ENCODE measurements at regions of chr19 and their contacts with region 1.

Region 1: GRCh38 chr19:34501339-34502320 is 20.1 kb downstream of the WTIP start:
- DNase-seq: peak; percentile 96
- H3K4me3 Mint-ChIP-seq: no peak overlapping the region
- H3K27ac Mint-ChIP-seq: no peak overlapping the region
- H3K4me1 Mint-ChIP-seq: peaks cover 3% of the 10 kb centered on the region
- H3K27me3 Mint-ChIP-seq: peaks cover 6% of the 10 kb centered on the region

Region 2: GRCh38 chr19:34404109-34404897 is 97.3 kb before region 1 on chr19 and contains the start of gene PDCD2L:
- intact Hi-C with region 1: loop called (anchors 2 kb)
- DNase-seq: peak; percentile 98
- H3K4me3 Mint-ChIP-seq: peak within 1 kb of the TSS; percentile 93
- H3K27ac Mint-ChIP-seq: peak within 1 kb of the TSS; percentile 94
- H3K4me1 Mint-ChIP-seq: peaks cover 8% of the 10 kb centered on the region
- H3K27me3 Mint-ChIP-seq: no peaks in the 10 kb centered on the region
- total RNA-seq, gene PDCD2L: 44.4 and 50.8 TPM in 2 replicates

Region 3: GRCh38 chr19:34461375-34462100 is 40.1 kb before region 1 on chr19:
- intact Hi-C with region 1: no loop called
- DNase-seq: no peak
- H3K4me3 Mint-ChIP-seq: no peak overlapping the region
- H3K27ac Mint-ChIP-seq: no peak overlapping the region
- H3K4me1 Mint-ChIP-seq: peaks cover 6% of the 10 kb centered on the region
- H3K27me3 Mint-ChIP-seq: no peaks in the 10 kb centered on the region

Region 4: DNA sequence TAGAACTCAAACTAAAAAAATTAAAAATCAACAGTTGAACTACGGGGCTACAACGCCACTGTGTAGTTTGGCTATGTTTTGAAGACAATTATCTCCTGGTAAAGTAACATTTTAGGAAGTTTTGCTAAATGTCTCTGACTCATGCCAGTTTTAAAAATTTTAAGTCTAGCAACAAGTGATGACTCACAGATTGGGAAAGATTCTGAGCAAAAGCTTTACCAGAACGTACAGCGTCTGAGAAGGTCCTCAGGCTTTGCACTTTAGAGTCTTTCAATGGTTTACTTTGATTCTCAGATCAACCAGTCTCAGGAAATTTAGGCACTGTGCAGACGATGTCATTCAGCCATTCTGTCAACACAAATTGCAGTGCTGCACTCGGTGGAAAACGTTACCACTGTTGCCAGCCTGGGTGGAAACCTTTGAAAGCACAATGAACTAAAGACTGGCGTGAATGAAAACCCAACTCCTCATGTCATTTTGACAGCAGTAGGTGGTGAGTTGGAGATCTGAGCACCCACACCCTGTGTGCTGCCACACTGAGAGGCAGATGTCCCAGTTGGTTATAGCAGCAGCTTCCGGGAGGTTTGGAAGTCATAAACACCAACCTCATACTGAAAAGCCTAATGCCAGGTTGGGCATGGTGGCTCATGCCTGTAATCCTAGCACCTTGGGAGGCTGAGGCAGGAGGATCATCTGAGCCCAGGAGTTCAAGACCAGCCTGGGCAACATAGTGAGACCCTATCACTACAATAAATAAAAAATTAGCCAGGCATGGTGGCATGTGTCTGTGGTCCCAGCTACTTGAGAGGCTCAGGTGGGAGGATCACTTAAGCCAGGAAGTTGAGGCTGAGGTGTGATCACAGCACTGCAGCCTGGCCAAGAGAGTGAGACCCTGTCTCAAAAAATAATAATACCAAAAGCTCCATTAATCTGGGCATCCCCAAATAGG is 26.3 kb before region 1 on chr19:
- intact Hi-C with region 1: loop called (anchors 2 kb)
- DNase-seq: no peak
- H3K4me3 Mint-ChIP-seq: no peak overlapping the region
- H3K27ac Mint-ChIP-seq: peak overlapping the region; percentile 62
- H3K4me1 Mint-ChIP-seq: peaks cover 7% of the 10 kb centered on the region
- H3K27me3 Mint-ChIP-seq: peaks cover 17% of the 10 kb centered on the region

Region 5: DNA sequence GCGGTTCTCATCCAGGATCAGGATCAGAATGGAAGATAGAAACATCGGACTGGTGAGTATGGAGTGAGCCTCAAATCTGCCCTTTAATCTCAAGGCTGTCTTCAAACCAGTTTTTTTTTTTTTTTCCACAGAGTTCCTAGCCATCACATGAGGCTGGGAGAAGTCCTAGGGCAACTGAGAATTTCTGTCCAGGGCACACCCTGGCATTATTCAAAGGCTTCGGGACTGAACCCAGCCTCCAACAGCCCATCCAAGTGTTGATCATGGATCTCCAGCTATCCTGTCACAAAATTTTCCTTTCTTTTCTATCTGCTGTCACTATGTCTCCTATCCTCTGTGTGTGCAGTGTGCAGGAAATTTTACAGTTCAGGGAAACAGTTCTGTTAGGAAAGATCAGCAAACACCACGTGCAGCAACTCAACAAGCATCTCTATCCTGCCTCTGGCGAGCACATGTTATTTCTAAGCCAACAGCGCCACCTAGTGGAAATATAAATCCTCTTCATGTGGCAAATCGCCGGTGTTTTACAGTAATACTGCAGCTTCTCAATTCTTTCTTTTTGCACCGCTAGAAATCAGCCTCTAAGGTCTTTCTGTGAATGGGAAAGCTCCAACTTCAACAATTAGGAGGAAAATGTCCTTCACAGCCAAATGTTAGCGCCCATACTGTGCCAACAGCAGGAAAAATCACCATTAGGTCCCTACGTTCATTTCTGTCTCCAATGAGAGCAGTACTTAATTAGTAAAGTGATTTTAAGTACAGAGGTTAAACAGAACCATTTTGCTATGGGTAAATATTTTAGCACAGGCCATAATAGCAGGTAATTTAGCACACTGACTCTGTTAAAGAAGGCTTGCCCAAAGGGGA is 211.0 kb after region 1 on chr19:
- intact Hi-C with region 1: loop called (anchors 1 kb)
- DNase-seq: peak; percentile 90
- H3K4me3 Mint-ChIP-seq: no peak overlapping the region
- H3K27ac Mint-ChIP-seq: no peak overlapping the region
- H3K4me1 Mint-ChIP-seq: no peaks in the 10 kb centered on the region
- H3K27me3 Mint-ChIP-seq: peaks cover 2% of the 10 kb centered on the region

Region 6: GRCh38 chr19:36114763-36115452 is 1613.3 kb after region 1 on chr19 and contains the start of gene POLR2I:
- intact Hi-C with region 1: no loop called
- DNase-seq: peak; percentile 99
- H3K4me3 Mint-ChIP-seq: peak within 1 kb of the TSS; percentile 94
- H3K27ac Mint-ChIP-seq: peak within 1 kb of the TSS; percentile 95
- H3K4me1 Mint-ChIP-seq: peaks cover 29% of the 10 kb centered on the region
- H3K27me3 Mint-ChIP-seq: peaks cover 4% of the 10 kb centered on the region
- total RNA-seq, gene POLR2I: 83.4 and 86.3 TPM in 2 replicates